Heart right ventricle (tissue), 16 donors: ENCODE measurements at regions of chr14 and their contacts with region 1.

Region 1: GRCh38 chr14:54566410-54567223 is at the start of gene SAMD4A:
- DNase-seq: peak; percentile 81 to 82
- ATAC-seq: peak; percentile 37 to 66 (median 52)
- H3K4me3 ChIP-seq: peak within 1 kb of the TSS; percentile 54 to 92 (median 83)
- H3K27ac ChIP-seq: peak within 1 kb of the TSS; percentile 92 to 100 (median 98)
- H3K4me1 ChIP-seq: peaks cover 0 to 56% (median 38%) of the 10 kb centered on the region in 9 donors
- H3K27me3 ChIP-seq: peaks cover 0 to 42% (median 0%) of the 10 kb centered on the region in 7 donors
- CTCF ChIP-seq: peak in 7 of 9 donors; percentile 14 to 60 (median 44)
- total RNA-seq, gene SAMD4A: 141 to 284 (median 233) TPM

Region 2: DNA sequence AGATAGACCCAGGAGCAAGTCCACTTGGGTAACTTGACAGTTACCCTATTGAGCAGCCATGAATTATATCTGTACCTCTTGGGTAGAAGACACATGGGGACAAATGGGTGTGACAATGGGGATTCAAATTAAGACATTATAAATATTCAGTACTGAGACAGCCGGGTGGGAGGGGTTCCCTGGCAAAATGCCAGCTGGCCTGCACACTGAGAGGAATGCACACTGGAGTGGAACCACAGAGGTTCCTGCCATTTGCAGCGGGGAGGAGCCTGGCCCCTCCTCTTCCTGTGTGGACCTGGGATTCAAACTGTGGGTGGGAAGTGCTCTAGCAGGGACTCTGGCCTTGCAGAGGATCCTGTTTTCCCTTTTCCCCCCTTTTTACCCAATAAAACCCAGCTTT is 288.5 kb before region 1 on chr14:
- intact Hi-C with region 1: no loop called
- DNase-seq: no peak
- ATAC-seq: no peak
- H3K4me3 ChIP-seq: no peak overlapping the region
- H3K27ac ChIP-seq: no peak overlapping the region
- H3K4me1 ChIP-seq: no peaks in the 10 kb centered on the region
- H3K27me3 ChIP-seq: no peaks in the 10 kb centered on the region
- CTCF ChIP-seq: no peak

Region 3: GRCh38 chr14:54622192-54622958 is 55.8 kb after region 1 on chr14:
- intact Hi-C with region 1: loop called in 4 of 10 experiments (anchors 5 to 10 kb)
- DNase-seq: no peak
- ATAC-seq: no peak
- H3K4me3 ChIP-seq: no peak overlapping the region
- H3K27ac ChIP-seq: no peak overlapping the region
- H3K4me1 ChIP-seq: peaks cover 0 to 42% (median 34%) of the 10 kb centered on the region in 9 donors
- H3K27me3 ChIP-seq: no peaks in the 10 kb centered on the region
- CTCF ChIP-seq: no peak

Region 4: GRCh38 chr14:54652188-54652587 is 85.6 kb after region 1 on chr14:
- intact Hi-C with region 1: loop called in 5 of 10 experiments (anchors 2 to 10 kb)
- DNase-seq: peak; percentile 72 to 91
- ATAC-seq: peak; percentile 74 to 92 (median 92)
- H3K4me3 ChIP-seq: peak overlapping the region in 7 of 10 donors; percentile 19 to 46 (median 31)
- H3K27ac ChIP-seq: peak overlapping the region; percentile 65 to 91 (median 84)
- H3K4me1 ChIP-seq: peaks cover 18 to 93% (median 75%) of the 10 kb centered on the region in 9 donors
- H3K27me3 ChIP-seq: no peaks in the 10 kb centered on the region
- CTCF ChIP-seq: no peak

Region 5: GRCh38 chr14:54691525-54692283 is 125.1 kb after region 1 on chr14:
- intact Hi-C with region 1: loop called in 9 of 10 experiments (anchors 1 to 5 kb)
- DNase-seq: peak; percentile 70 to 85
- ATAC-seq: peak; percentile 71 to 88 (median 82)
- H3K4me3 ChIP-seq: no peak overlapping the region
- H3K27ac ChIP-seq: peak overlapping the region in 9 of 10 donors; percentile 14 to 96 (median 75)
- H3K4me1 ChIP-seq: peaks cover 11 to 86% (median 52%) of the 10 kb centered on the region in 9 donors
- H3K27me3 ChIP-seq: no peaks in the 10 kb centered on the region
- CTCF ChIP-seq: peak; percentile 83 to 95 (median 91)

Region 6: GRCh38 chr14:54805521-54806322 is 239.1 kb after region 1 on chr14:
- intact Hi-C with region 1: loop called in 7 of 10 experiments (anchors 2 to 10 kb)
- DNase-seq: peak; percentile 86 to 87
- ATAC-seq: peak; percentile 87 to 95 (median 92)
- H3K4me3 ChIP-seq: peak overlapping the region in 4 of 10 donors; percentile 2 to 36 (median 18)
- H3K27ac ChIP-seq: no peak overlapping the region
- H3K4me1 ChIP-seq: peaks cover 0 to 11% (median 9%) of the 10 kb centered on the region in 9 donors
- H3K27me3 ChIP-seq: no peaks in the 10 kb centered on the region
- CTCF ChIP-seq: peak; percentile 90 to 98 (median 96)